B cell (primary cell): ENCODE measurements at regions of chr19 and their contacts with region 1.

Region 1: DNA sequence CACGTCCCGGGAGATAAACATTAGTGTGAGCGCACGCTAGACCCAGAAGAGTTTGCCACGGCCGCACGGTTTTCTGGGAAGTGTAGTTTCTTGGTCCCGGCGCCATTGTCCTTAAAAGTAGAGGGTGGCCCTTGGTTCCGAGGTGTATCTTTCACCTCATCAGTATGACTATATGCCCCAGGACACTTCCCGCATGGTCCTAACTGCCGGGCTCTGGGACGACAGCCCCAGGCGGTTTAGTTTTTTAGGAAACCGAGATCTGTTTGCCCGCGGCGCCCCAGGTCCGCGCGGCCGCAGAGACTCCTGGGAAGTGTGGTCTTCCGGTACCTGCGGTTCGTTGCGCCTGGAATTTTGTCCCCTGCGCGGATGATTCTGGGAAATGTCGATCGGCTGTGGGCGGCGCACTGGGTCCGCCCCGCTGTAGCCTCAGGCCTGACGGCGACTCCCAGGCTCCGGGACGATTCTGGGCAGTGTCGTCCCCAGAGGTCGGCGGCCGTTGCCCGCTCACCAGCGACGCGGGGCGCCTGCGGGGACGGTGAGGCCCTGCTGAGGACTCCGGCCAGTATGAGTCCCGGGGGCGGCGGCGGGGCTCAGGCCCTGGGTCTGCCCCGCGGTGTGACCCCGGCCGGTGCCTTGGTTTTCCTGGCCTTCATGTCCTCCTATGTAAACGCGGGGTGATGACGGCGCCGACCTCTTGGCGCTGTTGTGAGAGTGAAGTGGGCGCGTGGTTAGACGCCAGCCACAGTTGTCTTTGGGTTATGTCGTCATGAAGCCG is at the start of gene ZNF181:
- DNase-seq: peak; percentile 89
- ATAC-seq: peak; percentile 86
- H3K4me3 ChIP-seq: peak within 1 kb of the TSS; percentile 65 to 87 (median 80)
- H3K4me3 Mint-ChIP-seq: peak within 1 kb of the TSS; percentile 97
- H3K27ac ChIP-seq: peak within 1 kb of the TSS; percentile 73 to 91
- H3K27ac Mint-ChIP-seq: peak within 1 kb of the TSS; percentile 96
- H3K4me1 ChIP-seq: peaks cover 15 to 25% of the 10 kb centered on the region in 2 donors
- H3K4me1 Mint-ChIP-seq: peaks cover 25% of the 10 kb centered on the region
- H3K27me3 ChIP-seq: no peaks in the 10 kb centered on the region
- H3K27me3 Mint-ChIP-seq: no peaks in the 10 kb centered on the region
- CTCF ChIP-seq: no peak
- total RNA-seq, gene ZNF181: 13.6 and 13.8 TPM in 2 replicates

Region 2: GRCh38 chr19:34692549-34692948 is 41.5 kb before region 1 on chr19:
- CTCF ChIA-PET with region 1: no interaction called
- POLR2A ChIA-PET with region 1: no interaction called
- intact Hi-C with region 1: no loop called
- DNase-seq: no peak
- ATAC-seq: no peak
- H3K4me3 ChIP-seq: no peak overlapping the region
- H3K4me3 Mint-ChIP-seq: no peak overlapping the region
- H3K27ac ChIP-seq: no peak overlapping the region
- H3K27ac Mint-ChIP-seq: no peak overlapping the region
- H3K4me1 ChIP-seq: no peaks in the 10 kb centered on the region
- H3K4me1 Mint-ChIP-seq: no peaks in the 10 kb centered on the region
- H3K27me3 ChIP-seq: peaks cover 0 to 11% (median 4%) of the 10 kb centered on the region in 4 experiments
- H3K27me3 Mint-ChIP-seq: peaks cover 14% of the 10 kb centered on the region
- CTCF ChIP-seq: no peak

Region 3: DNA sequence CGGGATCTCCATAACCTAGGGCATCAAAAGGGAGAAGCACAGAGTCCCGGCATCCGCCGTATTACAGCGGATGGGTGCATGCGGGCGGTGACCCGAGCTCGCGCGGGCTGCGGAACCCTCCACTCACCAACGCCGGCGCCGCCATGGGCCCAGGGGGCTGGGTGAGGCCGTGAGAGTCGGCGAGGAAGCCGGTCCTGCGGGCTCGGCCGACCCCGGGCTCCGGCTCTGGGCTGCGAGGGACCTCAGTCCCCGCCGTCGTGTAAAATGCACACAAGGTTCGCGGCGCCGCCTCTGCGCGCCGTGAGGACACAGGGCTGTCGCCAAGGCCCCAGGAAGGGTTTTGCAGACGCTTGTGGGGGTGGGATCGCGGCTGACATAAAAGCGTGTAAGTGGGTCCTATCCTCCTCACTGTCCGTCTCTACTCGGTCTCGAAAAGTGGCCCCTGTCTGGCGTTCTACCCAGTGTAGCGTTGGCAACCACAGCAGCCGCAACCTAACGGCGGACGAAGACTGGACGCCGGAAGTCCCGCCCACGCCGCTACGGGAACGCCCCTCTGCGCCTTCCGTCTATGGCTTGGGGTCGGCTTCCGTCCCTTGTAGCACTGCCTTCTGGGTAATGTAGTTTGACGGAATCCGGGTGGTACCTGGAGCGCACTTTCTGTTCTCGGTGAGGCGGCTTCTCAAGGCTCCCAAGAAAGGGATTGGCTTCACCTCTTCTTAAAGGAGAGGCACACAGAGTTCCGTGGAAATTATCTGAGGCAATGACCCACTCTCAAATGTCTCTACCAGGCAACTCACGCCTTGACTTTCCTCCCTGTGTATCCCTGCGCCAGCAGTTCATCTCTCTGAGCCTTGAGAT is 38.9 kb after region 1 on chr19 and contains the start of gene ZNF599:
- CTCF ChIA-PET with region 1: interaction called, 7 read pairs
- POLR2A ChIA-PET with region 1: no interaction called
- intact Hi-C with region 1: loop called (anchors 1 kb)
- DNase-seq: peak; percentile 93
- ATAC-seq: peak; percentile 98
- H3K4me3 ChIP-seq: peak within 1 kb of the TSS; percentile 69 to 79 (median 73)
- H3K4me3 Mint-ChIP-seq: peak within 1 kb of the TSS; percentile 98
- H3K27ac ChIP-seq: peak within 1 kb of the TSS; percentile 50 to 74
- H3K27ac Mint-ChIP-seq: peak within 1 kb of the TSS; percentile 96
- H3K4me1 ChIP-seq: peaks cover 8 to 9% of the 10 kb centered on the region in 2 donors
- H3K4me1 Mint-ChIP-seq: peaks cover 19% of the 10 kb centered on the region
- H3K27me3 ChIP-seq: peaks cover 0 to 9% (median 2%) of the 10 kb centered on the region in 4 experiments
- H3K27me3 Mint-ChIP-seq: peaks cover 25% of the 10 kb centered on the region
- CTCF ChIP-seq: no peak
- total RNA-seq, gene ZNF599: 7.6 and 8.1 TPM in 2 replicates

Region 4: GRCh38 chr19:34926685-34927375 is 192.8 kb after region 1 on chr19 and contains the start of gene ZNF30:
- CTCF ChIA-PET with region 1: no interaction called
- POLR2A ChIA-PET with region 1: no interaction called
- intact Hi-C with region 1: loop called (anchors 1 kb)
- DNase-seq: peak; percentile 87
- ATAC-seq: peak; percentile 98
- H3K4me3 ChIP-seq: peak within 1 kb of the TSS; percentile 56 to 87 (median 76)
- H3K4me3 Mint-ChIP-seq: peak within 1 kb of the TSS; percentile 94
- H3K27ac ChIP-seq: peak within 1 kb of the TSS; percentile 34 to 56
- H3K27ac Mint-ChIP-seq: peak within 1 kb of the TSS; percentile 72
- H3K4me1 ChIP-seq: peaks cover 6 to 10% of the 10 kb centered on the region in 2 donors
- H3K4me1 Mint-ChIP-seq: peaks cover 11% of the 10 kb centered on the region
- H3K27me3 ChIP-seq: no peaks in the 10 kb centered on the region
- H3K27me3 Mint-ChIP-seq: peaks cover 10% of the 10 kb centered on the region
- CTCF ChIP-seq: no peak
- total RNA-seq, gene ZNF30: 3.3 and 5.1 TPM in 2 replicates

Region 5: GRCh38 chr19:34999498-35000341 is 265.7 kb after region 1 on chr19 and contains the start of gene GRAMD1A:
- CTCF ChIA-PET with region 1: no interaction called
- POLR2A ChIA-PET with region 1: no interaction called
- intact Hi-C with region 1: loop called (anchors 5 kb)
- DNase-seq: peak; percentile 77
- ATAC-seq: peak; percentile 61
- H3K4me3 ChIP-seq: peak within 1 kb of the TSS; percentile 66 to 84 (median 74)
- H3K4me3 Mint-ChIP-seq: peak within 1 kb of the TSS; percentile 93
- H3K27ac ChIP-seq: peak within 1 kb of the TSS; percentile 79 to 84
- H3K27ac Mint-ChIP-seq: peak within 1 kb of the TSS; percentile 91
- H3K4me1 ChIP-seq: peaks cover 47 to 67% of the 10 kb centered on the region in 2 donors
- H3K4me1 Mint-ChIP-seq: peaks cover 59% of the 10 kb centered on the region
- H3K27me3 ChIP-seq: no peaks in the 10 kb centered on the region
- H3K27me3 Mint-ChIP-seq: no peaks in the 10 kb centered on the region
- CTCF ChIP-seq: no peak
- total RNA-seq, gene GRAMD1A: 102 TPM in 2 replicates